ENCODE measurements at regions of chr6 and their contacts with region 1.

Region 1: DNA sequence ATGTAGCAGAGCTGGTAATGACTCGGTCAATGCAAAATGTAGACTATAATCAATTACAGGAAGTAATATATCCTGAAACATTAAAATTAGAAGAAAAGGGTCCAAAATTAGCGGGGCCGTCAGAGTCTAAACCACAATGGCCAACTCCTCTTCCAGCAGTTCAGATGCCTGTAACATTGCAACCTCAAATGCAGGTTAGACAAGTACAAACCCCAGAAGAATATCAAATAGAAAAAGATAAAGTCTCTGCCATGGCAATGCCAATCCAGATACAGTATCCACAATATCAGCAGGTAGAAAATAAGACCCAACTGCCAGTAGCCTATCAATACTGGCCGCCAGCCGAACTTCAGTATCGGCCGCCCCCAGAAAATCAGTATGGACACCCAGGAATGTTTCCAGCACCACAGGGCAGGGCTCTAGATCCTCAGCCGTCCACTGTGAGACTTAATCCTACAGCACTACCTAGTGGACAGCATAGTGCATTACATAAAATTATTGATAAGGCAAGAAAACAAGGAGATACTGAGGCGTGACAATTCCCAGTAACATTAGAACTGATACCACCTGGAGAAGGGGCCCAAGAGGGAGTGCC is 158.4 kb downstream of the GPX5 start:
- DNase-seq: peak; percentile 53
- ATAC-seq: peak; percentile 54
- H3K4me3 ChIP-seq: no peak overlapping the region
- H3K4me3 Mint-ChIP-seq: no peak overlapping the region
- H3K27ac ChIP-seq: no peak overlapping the region
- H3K27ac Mint-ChIP-seq: no peak overlapping the region
- H3K4me1 ChIP-seq: no peaks in the 10 kb centered on the region
- H3K4me1 Mint-ChIP-seq: no peaks in the 10 kb centered on the region
- H3K27me3 ChIP-seq: peaks cover 0 to 40% (median 31%) of the 10 kb centered on the region in 4 experiments
- H3K27me3 Mint-ChIP-seq: peaks cover 71% of the 10 kb centered on the region
- CTCF ChIP-seq: peak; percentile 76

Region 2: DNA sequence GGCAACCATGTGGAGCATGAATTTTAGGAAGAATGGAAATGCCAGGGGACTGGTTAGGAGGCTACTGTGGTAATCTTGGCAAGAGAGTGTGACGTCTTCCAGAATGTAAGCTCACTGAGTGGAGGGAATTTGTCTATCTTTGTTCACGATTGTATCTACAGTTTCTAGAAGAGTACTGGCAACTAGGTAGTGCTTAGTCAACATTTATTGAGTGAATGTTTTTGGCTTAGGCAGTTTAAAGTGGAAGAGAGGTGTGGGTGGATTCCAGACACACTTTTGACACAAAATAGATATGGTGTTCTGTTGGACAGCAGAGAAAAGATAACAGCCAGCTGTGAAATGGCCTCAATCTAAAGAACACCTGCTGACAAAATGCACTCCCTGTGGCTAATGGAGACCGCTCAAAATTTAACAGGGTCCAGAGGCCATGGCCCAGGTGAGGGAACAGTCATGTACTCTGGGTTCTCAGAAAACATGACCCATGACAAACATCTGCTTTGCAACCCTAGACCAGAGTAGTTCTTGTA is 19.1 kb before region 1 on chr6:
- CTCF ChIA-PET with region 1: no interaction called
- POLR2A ChIA-PET with region 1: no interaction called
- intact Hi-C with region 1: no loop called
- DNase-seq: no peak
- ATAC-seq: no peak
- H3K4me3 ChIP-seq: no peak overlapping the region
- H3K4me3 Mint-ChIP-seq: no peak overlapping the region
- H3K27ac ChIP-seq: no peak overlapping the region
- H3K27ac Mint-ChIP-seq: no peak overlapping the region
- H3K4me1 ChIP-seq: no peaks in the 10 kb centered on the region
- H3K4me1 Mint-ChIP-seq: no peaks in the 10 kb centered on the region
- H3K27me3 ChIP-seq: peaks cover 0 to 9% (median 8%) of the 10 kb centered on the region in 4 experiments
- H3K27me3 Mint-ChIP-seq: peaks cover 48% of the 10 kb centered on the region
- CTCF ChIP-seq: no peak

Region 3: GRCh38 chr6:29589423-29590048 is 905.5 kb after region 1 on chr6:
- CTCF ChIA-PET with region 1: interaction called, 4 read pairs
- POLR2A ChIA-PET with region 1: no interaction called
- intact Hi-C with region 1: loop called (anchors 1 kb)
- DNase-seq: peak; percentile 72
- ATAC-seq: peak; percentile 80
- H3K4me3 ChIP-seq: no peak overlapping the region
- H3K4me3 Mint-ChIP-seq: no peak overlapping the region
- H3K27ac ChIP-seq: no peak overlapping the region
- H3K27ac Mint-ChIP-seq: no peak overlapping the region
- H3K4me1 ChIP-seq: peaks cover 0 to 5% of the 10 kb centered on the region in 2 donors
- H3K4me1 Mint-ChIP-seq: peaks cover 2% of the 10 kb centered on the region
- H3K27me3 ChIP-seq: peaks cover 0 to 3% (median 0%) of the 10 kb centered on the region in 4 experiments
- H3K27me3 Mint-ChIP-seq: peaks cover 30% of the 10 kb centered on the region
- CTCF ChIP-seq: peak; percentile 98